ENCODE measurements at regions of chr1 and their contacts with region 1.

Region 1: GRCh38 chr1:18100491-18101063 is 7.0 kb upstream of the IGSF21 start:
- DNase-seq: no peak
- ATAC-seq: no peak
- H3K4me3 Mint-ChIP-seq: no peak overlapping the region
- H3K27ac Mint-ChIP-seq: no peak overlapping the region
- H3K4me1 Mint-ChIP-seq: no peaks in the 10 kb centered on the region
- H3K27me3 Mint-ChIP-seq: peaks cover 13% of the 10 kb centered on the region
- CTCF ChIP-seq: no peak

Region 2: GRCh38 chr1:17653728-17654351 is 446.7 kb before region 1 on chr1:
- CTCF ChIA-PET with region 1: interaction called, 7 read pairs
- POLR2A ChIA-PET with region 1: no interaction called
- intact Hi-C with region 1: loop called (anchors 2 kb)
- DNase-seq: peak; percentile 31
- ATAC-seq: peak; percentile 34
- H3K4me3 Mint-ChIP-seq: no peak overlapping the region
- H3K27ac Mint-ChIP-seq: no peak overlapping the region
- H3K4me1 Mint-ChIP-seq: peaks cover 2% of the 10 kb centered on the region
- H3K27me3 Mint-ChIP-seq: no peaks in the 10 kb centered on the region
- CTCF ChIP-seq: no peak

Region 3: DNA sequence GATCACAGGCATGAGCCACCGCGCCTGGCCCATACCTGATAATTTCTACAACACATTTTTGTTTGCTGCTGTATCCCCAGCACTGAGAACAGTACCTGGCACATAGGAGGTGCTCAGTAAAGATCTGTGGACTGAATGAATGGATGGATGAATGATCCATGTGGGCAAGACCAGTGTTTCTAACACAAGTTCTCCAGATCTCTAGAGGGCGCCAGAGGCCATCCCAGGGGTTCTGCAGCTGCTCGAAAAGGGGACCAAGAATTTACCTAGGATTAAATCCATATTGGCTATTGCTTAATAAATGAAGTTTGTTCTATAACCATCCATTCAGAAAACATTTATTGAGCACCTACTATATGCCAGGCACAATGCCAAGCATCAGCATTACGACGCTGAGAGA is 177.7 kb before region 1 on chr1:
- CTCF ChIA-PET with region 1: interaction called, 10 read pairs
- POLR2A ChIA-PET with region 1: no interaction called
- intact Hi-C with region 1: no loop called
- DNase-seq: no peak
- ATAC-seq: no peak
- H3K4me3 Mint-ChIP-seq: no peak overlapping the region
- H3K27ac Mint-ChIP-seq: no peak overlapping the region
- H3K4me1 Mint-ChIP-seq: no peaks in the 10 kb centered on the region
- H3K27me3 Mint-ChIP-seq: peaks cover 12% of the 10 kb centered on the region
- CTCF ChIP-seq: no peak

Region 4: DNA sequence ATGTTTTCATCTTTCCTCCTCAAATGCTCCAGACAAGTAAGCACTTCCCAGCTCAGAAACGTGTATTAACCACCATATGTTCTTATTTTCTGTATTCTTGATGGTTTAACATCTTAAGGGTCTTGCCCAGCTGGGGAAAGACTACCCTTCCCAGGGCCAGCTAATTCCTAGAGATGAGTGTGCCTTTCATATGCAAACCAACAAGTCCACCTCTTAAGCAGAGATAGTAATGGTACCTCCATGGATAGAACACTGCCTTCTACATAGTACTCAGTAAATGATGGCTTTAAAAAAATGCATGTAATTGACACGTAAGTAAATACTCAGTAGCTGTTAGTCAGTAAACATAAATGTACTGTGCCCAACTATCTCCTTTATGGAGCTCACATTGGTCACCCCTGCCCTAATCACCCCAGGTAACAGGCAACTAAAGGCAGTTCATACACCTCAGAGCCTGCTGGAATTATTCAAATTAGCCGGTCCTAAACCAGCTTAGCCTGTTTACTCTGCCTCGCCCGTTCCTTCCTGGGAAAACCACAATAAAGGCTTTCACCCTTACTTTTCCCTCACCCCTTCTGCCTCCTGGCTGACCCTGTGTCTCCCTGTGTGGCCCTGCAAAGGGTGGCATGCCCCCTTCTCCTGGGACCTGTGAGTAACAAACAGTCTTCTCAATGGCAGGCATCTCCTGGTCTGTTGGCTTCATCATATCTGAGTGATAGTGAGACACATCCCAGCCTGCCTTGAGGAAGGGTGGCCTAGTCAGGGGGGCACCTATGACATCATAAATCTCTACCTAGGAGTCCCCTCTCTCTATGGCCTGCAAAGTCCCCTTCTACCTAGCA is 340.0 kb after region 1 on chr1:
- CTCF ChIA-PET with region 1: no interaction called
- POLR2A ChIA-PET with region 1: no interaction called
- intact Hi-C with region 1: no loop called
- DNase-seq: no peak
- ATAC-seq: no peak
- H3K4me3 Mint-ChIP-seq: no peak overlapping the region
- H3K27ac Mint-ChIP-seq: no peak overlapping the region
- H3K4me1 Mint-ChIP-seq: no peaks in the 10 kb centered on the region
- H3K27me3 Mint-ChIP-seq: peaks cover 3% of the 10 kb centered on the region
- CTCF ChIP-seq: no peak